Sciatic nerve (tissue), 2 donors: ENCODE measurements at regions of chr6 and their contacts with region 1.

Region 1: DNA sequence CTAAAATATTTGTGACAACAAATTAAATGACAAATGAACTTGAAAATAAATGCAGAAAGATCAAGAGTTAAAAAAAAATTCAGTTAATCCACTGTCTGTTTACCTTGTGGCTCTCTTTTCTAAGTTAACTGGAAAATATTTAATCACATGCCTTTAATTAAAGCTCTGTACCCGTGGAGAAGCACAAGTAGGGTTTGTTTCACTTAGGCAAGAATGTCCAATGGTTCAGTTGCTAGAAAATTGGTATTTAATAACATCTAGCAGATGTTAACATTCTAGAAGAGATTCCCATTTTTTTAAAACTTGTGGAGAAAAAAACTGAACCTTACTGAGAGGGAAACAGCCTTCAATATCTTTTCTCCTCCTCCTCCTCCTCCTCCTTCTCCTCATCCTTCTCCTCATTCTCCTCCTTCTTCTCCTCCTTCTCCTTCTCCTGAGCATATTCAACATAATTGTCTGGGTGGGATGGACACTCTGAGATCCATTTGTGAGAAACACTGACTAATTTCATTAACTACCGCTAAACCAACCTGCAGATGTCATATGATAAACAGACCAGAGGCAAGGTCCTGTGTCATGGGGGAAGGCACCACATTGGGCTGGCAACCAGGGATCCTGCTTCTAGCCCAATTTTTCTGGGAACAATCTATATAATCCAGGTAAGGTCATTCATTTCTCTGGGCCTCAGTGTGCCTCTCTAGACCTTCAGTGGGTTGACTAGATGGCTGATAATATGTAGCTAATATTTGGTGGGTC is 44.1 kb upstream of the AKIRIN2 start:
- DNase-seq: no peak
- ATAC-seq: peak; percentile 65

Region 2: GRCh38 chr6:87333591-87334181 is 412.5 kb before region 1 on chr6:
- intact Hi-C with region 1: no loop called
- DNase-seq: no peak
- ATAC-seq: no peak

Region 3: DNA sequence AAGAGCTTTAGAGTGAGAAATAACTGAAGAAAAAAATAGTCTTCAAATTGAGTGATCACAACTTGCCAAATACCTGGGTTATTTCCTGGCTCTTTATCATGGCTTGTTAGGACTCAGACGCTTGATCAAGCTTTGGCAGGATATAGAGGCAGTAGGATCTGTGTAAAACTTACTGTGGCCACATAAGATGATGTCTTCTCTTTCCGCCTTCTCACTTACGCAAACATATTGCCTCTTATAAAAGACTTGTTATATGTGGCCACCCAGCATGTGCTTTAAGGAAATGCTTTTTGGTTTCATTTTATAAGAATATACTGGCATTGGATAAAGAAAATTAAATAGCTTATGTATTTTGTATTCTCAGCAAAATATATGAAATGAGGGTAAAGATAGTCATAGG is 57.6 kb after region 1 on chr6:
- intact Hi-C with region 1: loop called (anchors 2 kb)
- DNase-seq: no peak
- ATAC-seq: no peak

Region 4: GRCh38 chr6:87825821-87826221 is 79.7 kb after region 1 on chr6:
- intact Hi-C with region 1: no loop called
- DNase-seq: no peak
- ATAC-seq: peak; percentile 28